HEK293 (cell line): ENCODE measurements at regions of chr13 and their contacts with region 1.

Region 1: DNA sequence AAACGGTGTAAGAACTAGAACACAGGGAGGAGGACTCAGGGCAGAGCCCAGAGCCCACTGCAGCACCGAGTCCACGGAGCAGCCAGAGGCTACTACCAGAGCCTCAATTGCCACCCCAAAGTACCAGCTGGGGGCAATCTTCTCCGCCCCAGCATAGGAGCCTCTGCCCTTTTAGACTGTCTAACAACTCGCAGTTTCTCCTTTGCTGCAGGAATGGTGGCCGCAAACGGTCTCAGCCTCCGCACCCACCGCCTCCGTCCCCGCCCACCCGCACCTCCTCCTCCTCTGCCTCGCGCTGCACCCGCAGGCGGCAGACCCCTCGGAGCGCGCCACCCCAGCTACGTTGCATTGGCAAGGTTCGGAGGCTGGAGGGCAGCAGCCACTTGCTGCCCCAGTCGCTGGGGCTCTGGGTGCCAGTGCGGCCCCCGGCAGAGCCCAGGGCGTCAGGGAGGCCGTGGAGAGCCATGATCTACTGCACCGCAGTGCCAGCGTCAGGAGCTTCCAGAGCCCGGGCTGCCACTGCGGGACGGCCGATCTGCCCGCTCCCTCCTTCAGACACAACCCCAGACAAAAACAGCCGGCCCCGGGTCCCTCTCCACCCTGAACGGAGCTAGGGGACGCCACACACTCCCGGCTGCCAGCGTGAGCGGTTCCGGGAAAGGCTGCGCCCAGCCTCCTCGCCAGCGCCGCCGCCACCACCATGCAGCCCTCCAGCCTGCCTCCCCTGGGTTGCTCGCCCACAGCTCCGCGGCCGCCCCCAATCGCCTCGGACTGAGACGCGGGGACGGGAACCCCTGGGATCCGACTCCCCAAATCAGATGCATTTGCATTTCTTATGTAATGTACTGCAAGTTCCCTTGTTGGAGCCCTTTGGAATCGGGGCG is 1.8 kb downstream of the FGF14 start:
- H3K4me3 ChIP-seq: peak overlapping the region; percentile 41
- H3K27ac ChIP-seq: no peak overlapping the region
- H3K4me1 ChIP-seq: no peaks in the 10 kb centered on the region
- CTCF ChIP-seq: no peak

Region 2: GRCh38 chr13:102141625-102142472 is 258.2 kb before region 1 on chr13:
- CTCF ChIA-PET with region 1: interaction called, 10 read pairs
- POLR2A ChIA-PET with region 1: no interaction called
- H3K4me3 ChIP-seq: no peak overlapping the region
- H3K27ac ChIP-seq: no peak overlapping the region
- H3K4me1 ChIP-seq: no peaks in the 10 kb centered on the region
- CTCF ChIP-seq: no peak

Region 3: GRCh38 chr13:102291587-102292218 is 108.3 kb before region 1 on chr13:
- CTCF ChIA-PET with region 1: no interaction called
- POLR2A ChIA-PET with region 1: no interaction called
- H3K4me3 ChIP-seq: no peak overlapping the region
- H3K27ac ChIP-seq: no peak overlapping the region
- H3K4me1 ChIP-seq: no peaks in the 10 kb centered on the region
- CTCF ChIP-seq: no peak

Region 4: GRCh38 chr13:102642475-102642874 is 242.4 kb after region 1 on chr13:
- CTCF ChIA-PET with region 1: no interaction called
- POLR2A ChIA-PET with region 1: no interaction called
- H3K4me3 ChIP-seq: no peak overlapping the region
- H3K27ac ChIP-seq: no peak overlapping the region
- H3K4me1 ChIP-seq: no peaks in the 10 kb centered on the region
- CTCF ChIP-seq: no peak

Region 5: GRCh38 chr13:102657630-102658029 is 257.6 kb after region 1 on chr13:
- CTCF ChIA-PET with region 1: no interaction called
- POLR2A ChIA-PET with region 1: no interaction called
- H3K4me3 ChIP-seq: no peak overlapping the region
- H3K27ac ChIP-seq: no peak overlapping the region
- H3K4me1 ChIP-seq: no peaks in the 10 kb centered on the region
- CTCF ChIP-seq: no peak